AG04449 (cell line): ENCODE measurements at regions of chr11 and their contacts with region 1.

Region 1: DNA sequence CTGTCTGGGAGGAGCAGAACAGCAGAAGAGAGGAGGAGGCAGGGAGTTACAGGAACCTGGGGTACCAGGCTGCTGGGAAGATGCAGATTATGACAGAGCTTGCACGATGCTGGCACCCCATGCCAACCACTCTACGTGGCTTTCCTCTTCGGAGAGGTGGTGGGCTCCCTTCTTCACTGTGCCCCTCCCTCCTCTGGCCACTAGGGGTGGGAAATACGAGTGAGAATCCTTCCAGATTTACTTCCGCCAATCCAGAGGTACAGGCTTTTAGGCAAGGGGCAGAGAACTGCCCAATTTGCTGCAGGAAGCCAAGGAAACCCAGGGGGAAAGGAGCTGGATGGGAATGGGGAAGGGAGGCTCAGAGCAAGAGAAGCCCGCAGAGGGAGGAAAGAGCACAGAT is 12.3 kb downstream of the HYOU1 start:
- DNase-seq: no peak
- H3K4me3 ChIP-seq: no peak overlapping the region
- CTCF ChIP-seq: no peak

Region 2: GRCh38 chr11:118572061-118572980 is 472.4 kb before region 1 on chr11 and contains the start of gene ARCN1:
- CTCF ChIA-PET with region 1: no interaction called
- POLR2A ChIA-PET with region 1: no interaction called
- DNase-seq: no peak
- H3K4me3 ChIP-seq: peak within 1 kb of the TSS; percentile 97
- CTCF ChIP-seq: no peak

Region 3: DNA sequence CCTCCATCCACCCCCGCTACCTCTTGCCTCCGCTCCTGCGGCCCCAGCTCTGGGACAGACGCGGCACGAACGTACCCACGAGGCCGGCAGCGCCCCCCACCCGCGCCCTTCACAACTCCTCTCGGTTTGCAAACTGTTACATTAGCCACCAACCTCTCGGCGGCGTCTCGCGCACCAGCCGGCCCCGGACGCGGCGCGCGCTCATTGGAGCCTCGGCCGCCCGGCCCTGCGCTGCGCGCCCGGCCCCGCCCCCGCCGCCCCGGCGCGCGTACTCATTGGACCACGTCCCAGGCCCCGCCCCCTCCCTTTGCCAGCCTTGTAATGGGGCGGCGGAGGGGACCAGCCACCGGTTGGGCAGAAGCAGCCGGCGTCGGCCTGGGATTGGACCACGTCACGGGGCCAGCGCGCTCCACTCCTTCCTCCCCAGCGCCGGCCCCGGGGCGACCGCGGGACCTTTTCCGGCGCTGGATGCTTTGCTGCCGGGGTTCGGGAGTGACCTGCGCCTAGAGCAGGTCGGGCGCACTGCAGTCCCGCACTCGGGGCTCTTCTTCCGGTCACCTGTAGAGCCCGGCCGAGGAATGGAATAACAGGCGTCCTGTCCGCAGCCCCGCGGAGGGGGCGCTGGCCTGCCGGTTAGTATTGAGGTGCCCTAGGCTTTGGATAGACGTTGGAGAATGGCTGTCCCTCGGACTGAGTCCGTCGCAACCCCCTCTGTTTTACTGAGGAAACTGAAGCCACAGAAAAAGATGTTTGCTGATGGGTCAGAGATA is 12.5 kb after region 1 on chr11 and contains the start of gene HYOU1:
- CTCF ChIA-PET with region 1: interaction called, 13 read pairs
- POLR2A ChIA-PET with region 1: interaction called, 3 read pairs
- DNase-seq: peak; percentile 63
- H3K4me3 ChIP-seq: peak within 1 kb of the TSS; percentile 85
- CTCF ChIP-seq: peak; percentile 35